Activated naive CD4-positive, alpha-beta T cell treated with anti-CD3 and anti-CD28 coated beads for 36 hours (primary cell): ENCODE measurements at regions of chr6 and their contacts with region 1.

Region 1: GRCh38 chr6:157981395-157982296 is at the start of gene SYNJ2:
- DNase-seq: peak; percentile 88
- H3K4me3 Mint-ChIP-seq: peak within 1 kb of the TSS; percentile 88
- H3K27ac Mint-ChIP-seq: peak within 1 kb of the TSS; percentile 83
- H3K4me1 Mint-ChIP-seq: peaks cover 34% of the 10 kb centered on the region
- H3K27me3 Mint-ChIP-seq: no peaks in the 10 kb centered on the region
- total RNA-seq, gene SYNJ2: 42.4 to 42.7 TPM

Region 2: GRCh38 chr6:157428427-157429202 is 553.0 kb before region 1 on chr6:
- CTCF ChIA-PET with region 1: no interaction called
- intact Hi-C with region 1: loop called (anchors 1 kb)
- DNase-seq: peak; percentile 94
- H3K4me3 Mint-ChIP-seq: peak overlapping the region; percentile 43
- H3K27ac Mint-ChIP-seq: peak overlapping the region; percentile 90
- H3K4me1 Mint-ChIP-seq: peaks cover 43% of the 10 kb centered on the region
- H3K27me3 Mint-ChIP-seq: no peaks in the 10 kb centered on the region

Region 3: DNA sequence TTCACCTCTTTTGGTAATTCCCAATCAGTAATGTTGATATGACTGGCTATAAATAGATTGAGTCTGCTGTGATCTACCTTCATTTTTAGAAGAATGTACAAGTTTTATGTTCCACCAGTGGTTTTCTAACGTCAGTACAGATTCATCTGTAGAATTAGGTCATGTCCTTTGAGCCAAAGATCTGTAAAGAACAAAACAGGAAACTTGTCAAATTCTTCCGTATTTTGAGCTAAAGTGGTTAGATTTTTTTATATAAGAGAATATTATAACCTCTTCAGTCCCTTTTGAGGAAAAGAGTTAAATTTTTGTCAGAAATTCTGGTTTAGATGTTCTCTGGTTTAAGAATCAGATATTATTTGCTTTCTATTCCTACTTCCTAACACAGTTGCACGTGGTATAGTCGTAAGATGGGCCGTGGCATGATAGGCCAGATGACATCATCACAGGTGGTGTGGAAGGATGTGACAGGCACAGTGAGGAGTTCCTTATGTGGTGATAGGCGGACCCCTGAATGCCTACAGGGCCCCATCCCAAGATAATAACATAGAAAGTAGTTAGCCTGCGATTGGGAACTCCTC is 96.3 kb before region 1 on chr6:
- CTCF ChIA-PET with region 1: no interaction called
- intact Hi-C with region 1: loop called (anchors 2 kb)
- DNase-seq: peak; percentile 88
- H3K4me3 Mint-ChIP-seq: peak overlapping the region; percentile 50
- H3K27ac Mint-ChIP-seq: peak overlapping the region; percentile 97
- H3K4me1 Mint-ChIP-seq: peaks cover 79% of the 10 kb centered on the region
- H3K27me3 Mint-ChIP-seq: no peaks in the 10 kb centered on the region

Region 4: DNA sequence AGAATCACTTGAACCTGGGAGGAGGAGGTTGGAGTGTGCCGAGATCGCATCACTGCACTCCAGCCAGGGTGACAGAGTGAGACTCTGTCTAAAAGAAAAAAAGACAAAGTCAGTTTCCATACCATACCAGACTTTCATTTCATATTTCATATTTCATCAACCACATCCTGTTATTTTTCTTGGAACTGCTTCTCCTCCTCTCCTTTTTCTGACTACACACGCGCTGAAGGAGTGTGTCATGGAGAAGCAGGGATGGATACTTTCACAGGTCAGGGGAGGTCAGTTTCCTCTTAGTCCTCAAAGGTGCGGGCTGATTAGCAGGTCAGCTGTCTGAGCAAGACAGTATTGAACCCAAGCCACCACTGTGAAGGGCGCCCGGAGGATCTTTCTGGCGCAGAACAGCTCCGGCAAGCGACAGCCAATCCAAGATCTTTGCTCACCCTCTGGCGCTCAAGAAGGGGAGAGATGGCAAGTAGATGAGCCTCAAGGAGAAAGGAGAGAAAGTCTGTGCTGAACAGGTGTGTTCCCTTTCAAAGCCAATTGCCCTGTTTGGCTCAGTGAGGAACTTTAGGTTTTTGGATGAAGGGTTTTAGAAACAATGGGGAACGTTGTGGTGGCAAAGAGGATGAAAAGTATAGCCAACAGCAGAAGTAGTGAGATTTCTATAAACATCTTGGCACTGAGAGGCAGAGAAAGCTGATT is 18.9 kb before region 1 on chr6:
- CTCF ChIA-PET with region 1: interaction called, 3 read pairs
- intact Hi-C with region 1: loop called (anchors 1 kb)
- DNase-seq: peak; percentile 55
- H3K4me3 Mint-ChIP-seq: peak overlapping the region; percentile 65
- H3K27ac Mint-ChIP-seq: peak overlapping the region; percentile 89
- H3K4me1 Mint-ChIP-seq: peaks cover 21% of the 10 kb centered on the region
- H3K27me3 Mint-ChIP-seq: no peaks in the 10 kb centered on the region

Region 5: DNA sequence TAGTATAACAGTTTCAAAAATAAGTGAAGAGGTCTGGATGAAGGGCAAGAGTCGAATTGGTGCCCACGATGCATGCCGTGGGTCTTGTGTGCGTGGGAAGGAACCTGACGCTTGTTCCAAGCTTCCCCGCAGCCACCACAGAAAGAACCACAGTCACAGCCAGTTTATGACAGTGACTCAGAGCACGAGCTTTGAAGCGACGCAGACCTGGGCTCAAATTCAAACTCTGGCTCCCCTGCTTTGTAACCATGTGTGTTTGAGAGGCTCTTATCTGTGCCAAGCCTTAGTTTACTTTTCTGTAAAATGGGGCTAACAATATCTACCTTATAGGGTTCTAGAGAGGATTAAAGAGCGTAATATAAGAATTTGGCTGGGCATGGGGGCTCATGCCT is 65.5 kb after region 1 on chr6:
- CTCF ChIA-PET with region 1: no interaction called
- intact Hi-C with region 1: loop called (anchors 1 kb)
- DNase-seq: peak; percentile 91
- H3K4me3 Mint-ChIP-seq: peak overlapping the region; percentile 2
- H3K27ac Mint-ChIP-seq: peak overlapping the region; percentile 73
- H3K4me1 Mint-ChIP-seq: peaks cover 25% of the 10 kb centered on the region
- H3K27me3 Mint-ChIP-seq: no peaks in the 10 kb centered on the region

Region 6: DNA sequence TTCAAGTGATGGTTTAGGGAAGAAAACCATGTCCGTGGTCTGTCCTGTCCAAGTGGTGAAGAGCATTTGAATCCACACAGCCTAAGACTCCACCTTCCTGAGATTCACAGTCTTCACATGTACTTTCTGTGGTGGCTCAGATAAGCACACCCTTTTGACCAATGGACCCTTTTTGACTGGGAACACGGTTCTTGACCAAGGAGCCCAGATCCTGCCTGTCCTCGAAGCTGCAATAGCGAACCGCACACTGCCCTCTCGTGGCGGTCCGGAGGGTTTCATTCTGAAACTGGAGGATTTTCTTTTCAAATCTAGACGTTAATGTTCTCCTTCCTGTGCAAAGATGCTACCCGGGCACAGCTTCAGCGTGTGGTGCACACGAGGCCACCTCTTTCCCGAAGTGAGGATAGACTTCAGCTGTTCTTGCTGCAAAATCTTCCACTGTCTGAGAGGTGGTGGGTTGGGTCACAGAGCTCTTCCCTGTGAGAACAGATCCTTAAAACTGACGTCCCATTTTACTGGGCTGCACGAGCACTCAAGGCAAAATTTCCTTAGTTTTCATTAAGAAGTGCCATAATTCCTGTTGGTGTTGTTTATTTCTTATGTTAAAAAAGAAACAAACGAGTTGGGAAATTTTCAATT is 90.6 kb after region 1 on chr6:
- CTCF ChIA-PET with region 1: interaction called, 26 read pairs
- intact Hi-C with region 1: loop called (anchors 1 kb)
- DNase-seq: peak; percentile 86
- H3K4me3 Mint-ChIP-seq: no peak overlapping the region
- H3K27ac Mint-ChIP-seq: peak overlapping the region; percentile 65
- H3K4me1 Mint-ChIP-seq: peaks cover 26% of the 10 kb centered on the region
- H3K27me3 Mint-ChIP-seq: no peaks in the 10 kb centered on the region

Region 7: GRCh38 chr6:158213925-158214674 is 232.5 kb after region 1 on chr6:
- CTCF ChIA-PET with region 1: no interaction called
- intact Hi-C with region 1: no loop called
- DNase-seq: peak; percentile 68
- H3K4me3 Mint-ChIP-seq: no peak overlapping the region
- H3K27ac Mint-ChIP-seq: no peak overlapping the region
- H3K4me1 Mint-ChIP-seq: peaks cover 8% of the 10 kb centered on the region
- H3K27me3 Mint-ChIP-seq: no peaks in the 10 kb centered on the region

Region 8: DNA sequence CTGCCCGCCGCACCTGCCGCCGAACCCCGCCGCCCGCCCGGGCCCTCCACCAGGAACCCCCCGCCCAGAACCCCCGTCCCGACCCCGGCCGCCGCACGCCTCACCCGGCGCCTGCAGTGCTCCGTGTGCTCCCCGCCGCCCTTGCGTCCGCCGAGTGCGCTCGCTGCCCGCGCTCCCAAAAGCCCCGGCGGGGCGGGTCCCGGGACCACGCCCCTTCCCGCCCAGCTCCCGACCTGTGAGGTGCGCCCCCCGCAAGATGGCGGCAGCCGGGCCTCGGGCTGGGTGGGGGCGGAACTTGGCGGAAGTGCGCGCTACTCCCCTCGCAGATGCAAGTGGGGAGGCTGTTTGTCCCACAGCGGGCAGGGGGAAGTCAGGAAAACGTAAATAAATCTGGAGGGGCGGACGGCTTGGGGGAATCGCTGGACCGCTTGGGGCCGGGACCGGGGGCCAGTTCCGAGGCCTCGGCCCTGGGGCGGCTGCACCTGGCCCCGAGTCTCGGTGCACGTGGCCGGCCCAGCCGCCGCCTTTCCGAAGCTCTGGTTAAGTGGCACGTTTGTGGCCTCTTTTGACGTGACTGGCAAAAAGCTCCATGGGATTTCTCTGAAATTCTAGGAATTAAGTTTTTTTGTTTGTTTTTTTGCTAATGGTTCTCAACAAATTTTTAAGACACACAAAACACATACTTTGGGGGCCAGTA is 837.7 kb after region 1 on chr6 and contains the start of gene EZR:
- CTCF ChIA-PET with region 1: no interaction called
- intact Hi-C with region 1: loop called (anchors 1 kb)
- DNase-seq: peak; percentile 87
- H3K4me3 Mint-ChIP-seq: peak within 1 kb of the TSS; percentile 97
- H3K27ac Mint-ChIP-seq: peak within 1 kb of the TSS; percentile 98
- H3K4me1 Mint-ChIP-seq: peaks cover 47% of the 10 kb centered on the region
- H3K27me3 Mint-ChIP-seq: no peaks in the 10 kb centered on the region
- total RNA-seq, gene EZR: 229 to 230 TPM